Panc1 (cell line): ENCODE measurements at regions of chr1 and their contacts with region 1.

Region 1: DNA sequence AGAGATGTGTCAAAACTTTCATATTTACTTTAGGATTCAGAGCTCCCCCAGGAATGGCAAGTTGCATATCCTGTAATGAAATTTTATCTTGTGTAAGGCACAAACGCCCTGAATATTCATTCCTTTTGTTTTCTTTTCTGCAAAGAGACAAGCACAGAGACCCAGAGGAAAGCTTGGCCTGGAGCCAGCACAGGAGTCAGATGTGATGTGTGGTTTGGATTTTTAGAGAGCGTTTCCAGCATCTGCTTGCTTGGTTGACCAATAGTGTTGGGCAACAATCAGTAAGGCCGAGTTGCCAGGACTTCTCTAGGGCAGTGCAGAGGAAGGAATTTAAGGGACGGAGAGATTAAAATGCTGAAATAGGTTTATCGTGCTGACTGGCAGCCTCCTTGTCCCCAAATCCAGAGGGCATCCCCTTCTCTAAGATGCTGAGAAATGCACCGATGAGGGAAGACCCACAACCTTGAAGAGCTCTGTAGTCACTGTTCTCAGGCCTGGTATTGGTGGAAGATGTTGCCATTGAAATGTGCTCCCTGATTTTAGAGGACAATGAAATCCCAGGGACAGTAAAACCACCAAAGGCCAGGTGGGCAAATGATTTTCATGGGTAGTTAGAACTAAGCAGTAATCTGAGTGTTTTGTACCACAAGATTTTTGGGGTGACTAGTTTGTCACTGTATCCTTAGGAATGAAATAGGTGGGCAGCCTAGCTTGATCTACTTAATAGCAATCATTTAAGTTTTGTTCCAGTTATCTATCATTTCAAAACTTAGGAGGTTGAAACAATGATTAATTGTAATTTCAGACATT is 37.9 kb upstream of the RHOU start:
- DNase-seq: no peak
- ATAC-seq: no peak
- H3K4me3 ChIP-seq: no peak overlapping the region
- H3K27ac ChIP-seq: no peak overlapping the region
- H3K4me1 ChIP-seq: no peaks in the 10 kb centered on the region
- H3K27me3 ChIP-seq: no peaks in the 10 kb centered on the region
- CTCF ChIP-seq: no peak

Region 2: GRCh38 chr1:228804671-228805413 is 107.4 kb after region 1 on chr1:
- CTCF ChIA-PET with region 1: no interaction called
- POLR2A ChIA-PET with region 1: no interaction called
- in situ Hi-C with region 1: no loop called
- intact Hi-C with region 1: no loop called
- DNase-seq: no peak
- ATAC-seq: no peak
- H3K4me3 ChIP-seq: no peak overlapping the region
- H3K27ac ChIP-seq: no peak overlapping the region
- H3K4me1 ChIP-seq: no peaks in the 10 kb centered on the region
- H3K27me3 ChIP-seq: no peaks in the 10 kb centered on the region; the same call in 1 of the 2 replicates
- CTCF ChIP-seq: no peak

Region 3: DNA sequence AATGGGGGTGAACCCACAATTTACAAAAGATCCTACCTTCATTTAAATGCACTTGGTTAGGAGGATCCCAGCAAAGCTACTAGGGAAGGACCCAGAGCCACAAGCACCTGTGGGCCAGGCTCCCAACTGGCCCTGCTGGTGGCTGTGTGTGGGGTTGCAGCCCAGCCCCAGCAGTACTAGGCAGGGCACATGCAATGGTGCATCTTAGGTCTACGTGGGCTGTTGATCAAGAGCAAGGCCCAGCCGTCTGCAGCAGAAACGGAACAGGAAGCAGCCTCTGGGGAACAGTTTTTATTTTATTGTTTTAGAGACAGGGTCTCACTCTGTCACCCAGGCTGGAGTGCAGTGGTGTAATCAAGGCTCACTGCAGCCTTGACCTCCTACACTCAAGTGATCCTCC is 439.4 kb after region 1 on chr1:
- CTCF ChIA-PET with region 1: no interaction called
- POLR2A ChIA-PET with region 1: interaction called, 21 read pairs
- in situ Hi-C with region 1: no loop called
- intact Hi-C with region 1: no loop called
- DNase-seq: no peak
- ATAC-seq: no peak
- H3K4me3 ChIP-seq: no peak overlapping the region
- H3K27ac ChIP-seq: no peak overlapping the region
- H3K4me1 ChIP-seq: no peaks in the 10 kb centered on the region
- H3K27me3 ChIP-seq: 0 out of 2 replicates have a peak, but pooled peaks cover 3% of the 10 kb centered on the region
- CTCF ChIP-seq: no peak